Transverse colon (tissue), 4 donors: ENCODE measurements at regions of chr18 and their contacts with region 1.

Region 1: DNA sequence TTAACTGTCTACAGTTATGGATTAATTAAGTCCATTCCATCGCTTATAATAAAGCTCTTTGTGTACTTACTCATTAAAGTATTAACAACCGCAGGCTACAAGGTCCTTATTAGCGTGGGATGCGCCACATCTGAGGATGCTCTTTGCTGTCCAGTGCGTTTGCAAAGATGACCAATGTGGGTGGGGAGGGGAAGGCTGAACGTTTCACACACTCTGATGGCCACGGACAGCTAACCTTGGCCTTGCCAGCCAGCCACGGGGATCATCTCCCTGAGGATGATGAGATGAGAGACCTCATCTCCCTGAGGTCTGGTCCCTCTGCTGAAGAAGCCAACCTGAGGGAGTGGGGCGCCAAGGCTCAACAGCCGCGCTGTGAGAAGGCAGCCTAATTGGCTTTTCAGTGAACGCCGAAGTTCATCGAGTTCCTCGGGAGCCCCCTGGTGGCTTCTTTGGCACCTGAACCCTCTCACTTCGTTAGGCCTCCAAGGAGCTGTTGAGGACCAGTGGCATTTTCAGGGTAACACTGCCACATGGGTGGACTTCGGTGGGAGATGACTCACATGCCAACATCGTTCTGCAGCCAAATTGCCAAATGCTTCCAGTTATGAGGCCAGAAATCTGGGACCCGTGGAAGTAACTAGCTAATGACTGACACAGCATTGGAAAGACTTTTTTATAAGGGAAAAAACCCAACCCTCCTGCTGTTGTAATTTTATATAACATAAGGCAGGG is 69.3 kb upstream of the SEC11C start:
- DNase-seq: peak; percentile 87
- H3K4me3 ChIP-seq: no peak overlapping the region
- H3K27ac ChIP-seq: no peak overlapping the region
- H3K4me1 ChIP-seq: peaks cover 0 to 3% (median 0%) of the 10 kb centered on the region in 4 donors
- H3K27me3 ChIP-seq: no peaks in the 10 kb centered on the region
- CTCF ChIP-seq: peak; percentile 74 to 89 (median 84)
- EP300 ChIP-seq: no peak
- POLR2A ChIP-seq: no peak

Region 2: DNA sequence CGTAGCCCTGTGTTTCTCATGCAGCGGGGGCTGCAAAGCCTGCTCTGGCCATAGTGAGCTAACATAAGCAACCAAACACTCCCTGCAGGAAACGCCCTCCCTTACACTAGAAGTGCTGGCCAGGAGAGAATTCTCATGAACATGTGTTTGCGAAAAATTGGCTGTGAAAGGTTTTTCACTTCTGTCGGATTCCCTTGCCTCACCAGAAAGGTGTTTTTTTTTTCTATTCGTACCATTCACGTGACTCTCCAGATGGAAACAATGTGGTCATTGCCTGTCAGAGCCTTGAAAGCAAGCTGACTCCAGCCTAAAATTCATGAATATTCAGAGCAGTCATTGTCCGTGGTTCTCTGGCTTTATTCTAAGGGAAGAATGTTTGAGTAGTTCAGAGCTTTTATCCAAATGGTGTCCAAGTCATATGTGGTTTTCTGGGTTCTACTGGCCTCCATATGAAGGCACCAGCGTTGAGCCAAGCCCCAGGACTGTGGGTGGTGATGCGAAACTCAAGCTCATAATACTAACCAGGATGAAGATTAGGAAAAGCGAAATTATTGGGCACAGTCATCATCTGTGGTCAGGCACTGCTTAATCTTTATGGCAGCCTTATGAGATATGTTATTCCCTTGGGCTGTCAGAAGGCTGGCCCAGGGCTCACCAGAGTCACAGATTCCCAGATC is 677.9 kb before region 1 on chr18:
- in situ Hi-C with region 1: loop called in 1 of 4 experiments (anchors 25 kb)
- intact Hi-C with region 1: no loop called
- DNase-seq: no peak
- H3K4me3 ChIP-seq: no peak overlapping the region
- H3K27ac ChIP-seq: peak overlapping the region; percentile 57 to 77 (median 66)
- H3K4me1 ChIP-seq: peaks cover 8 to 32% (median 13%) of the 10 kb centered on the region in 4 donors
- H3K27me3 ChIP-seq: no peaks in the 10 kb centered on the region
- CTCF ChIP-seq: no peak
- EP300 ChIP-seq: no peak
- POLR2A ChIP-seq: no peak

Region 3: GRCh38 chr18:58501066-58501896 is 569.1 kb before region 1 on chr18:
- in situ Hi-C with region 1: loop called in 1 of 4 experiments (anchors 25 kb)
- intact Hi-C with region 1: no loop called
- DNase-seq: no peak
- H3K4me3 ChIP-seq: no peak overlapping the region
- H3K27ac ChIP-seq: peak overlapping the region; percentile 48 to 54 (median 53)
- H3K4me1 ChIP-seq: peaks cover 0 to 33% (median 11%) of the 10 kb centered on the region in 4 donors
- H3K27me3 ChIP-seq: no peaks in the 10 kb centered on the region
- CTCF ChIP-seq: no peak
- EP300 ChIP-seq: no peak
- POLR2A ChIP-seq: no peak

Region 4: DNA sequence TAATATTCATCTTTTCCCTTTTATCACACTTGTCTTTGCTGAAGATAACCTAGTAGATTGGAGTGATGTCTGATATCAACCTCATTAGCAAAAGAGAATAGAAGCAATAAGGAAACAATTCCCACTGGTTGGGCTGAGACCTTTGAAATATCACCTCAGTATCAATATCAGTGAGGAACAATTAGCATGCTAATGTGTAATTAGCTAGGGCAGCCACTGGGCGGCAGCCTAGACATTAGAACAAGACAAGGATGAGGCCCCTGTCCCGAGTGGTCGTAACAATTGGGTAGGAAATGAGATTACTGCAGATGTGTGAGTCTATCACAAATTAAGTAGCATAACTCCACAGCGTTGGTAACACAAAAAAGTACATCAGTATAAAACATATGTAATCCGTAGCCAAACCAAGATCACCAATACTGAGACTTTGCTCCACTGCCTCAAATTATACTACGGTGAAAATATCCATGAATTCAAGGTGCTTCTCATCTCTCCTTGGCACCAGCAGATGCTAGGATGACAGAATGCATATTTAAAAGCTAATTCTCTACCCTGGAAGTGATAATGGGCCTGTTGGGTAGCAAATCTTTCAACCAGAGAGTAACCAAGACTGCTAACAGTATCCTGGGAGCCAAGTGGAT is 540.5 kb before region 1 on chr18:
- in situ Hi-C with region 1: loop called in 3 of 4 experiments (anchors 25 kb)
- intact Hi-C with region 1: loop called (anchors 10 kb)
- DNase-seq: peak; percentile 71
- H3K4me3 ChIP-seq: no peak overlapping the region
- H3K27ac ChIP-seq: no peak overlapping the region
- H3K4me1 ChIP-seq: peaks cover 12 to 38% (median 14%) of the 10 kb centered on the region in 4 donors
- H3K27me3 ChIP-seq: no peaks in the 10 kb centered on the region
- CTCF ChIP-seq: peak; percentile 75 to 88 (median 80)
- EP300 ChIP-seq: no peak
- POLR2A ChIP-seq: no peak

Region 5: GRCh38 chr18:58768293-58768974 is 301.9 kb before region 1 on chr18:
- in situ Hi-C with region 1: no loop called
- intact Hi-C with region 1: loop called (anchors 2 kb)
- DNase-seq: peak; percentile 83
- H3K4me3 ChIP-seq: peak overlapping the region in 2 of 4 donors; percentile 16 to 40
- H3K27ac ChIP-seq: no peak overlapping the region
- H3K4me1 ChIP-seq: peaks cover 7 to 19% (median 12%) of the 10 kb centered on the region in 4 donors
- H3K27me3 ChIP-seq: peaks cover 23% of the 10 kb centered on the region
- CTCF ChIP-seq: peak; percentile 65 to 81 (median 77)
- EP300 ChIP-seq: no peak
- POLR2A ChIP-seq: no peak

Region 6: GRCh38 chr18:58781627-58782194 is 288.6 kb before region 1 on chr18:
- in situ Hi-C with region 1: loop called in 1 of 4 experiments (anchors 5 kb)
- intact Hi-C with region 1: loop called (anchors 2 kb)
- DNase-seq: peak; percentile 80
- H3K4me3 ChIP-seq: no peak overlapping the region
- H3K27ac ChIP-seq: no peak overlapping the region
- H3K4me1 ChIP-seq: peaks cover 0 to 17% (median 11%) of the 10 kb centered on the region in 4 donors
- H3K27me3 ChIP-seq: no peaks in the 10 kb centered on the region
- CTCF ChIP-seq: peak; percentile 84 to 95 (median 87)
- EP300 ChIP-seq: no peak
- POLR2A ChIP-seq: no peak

Region 7: DNA sequence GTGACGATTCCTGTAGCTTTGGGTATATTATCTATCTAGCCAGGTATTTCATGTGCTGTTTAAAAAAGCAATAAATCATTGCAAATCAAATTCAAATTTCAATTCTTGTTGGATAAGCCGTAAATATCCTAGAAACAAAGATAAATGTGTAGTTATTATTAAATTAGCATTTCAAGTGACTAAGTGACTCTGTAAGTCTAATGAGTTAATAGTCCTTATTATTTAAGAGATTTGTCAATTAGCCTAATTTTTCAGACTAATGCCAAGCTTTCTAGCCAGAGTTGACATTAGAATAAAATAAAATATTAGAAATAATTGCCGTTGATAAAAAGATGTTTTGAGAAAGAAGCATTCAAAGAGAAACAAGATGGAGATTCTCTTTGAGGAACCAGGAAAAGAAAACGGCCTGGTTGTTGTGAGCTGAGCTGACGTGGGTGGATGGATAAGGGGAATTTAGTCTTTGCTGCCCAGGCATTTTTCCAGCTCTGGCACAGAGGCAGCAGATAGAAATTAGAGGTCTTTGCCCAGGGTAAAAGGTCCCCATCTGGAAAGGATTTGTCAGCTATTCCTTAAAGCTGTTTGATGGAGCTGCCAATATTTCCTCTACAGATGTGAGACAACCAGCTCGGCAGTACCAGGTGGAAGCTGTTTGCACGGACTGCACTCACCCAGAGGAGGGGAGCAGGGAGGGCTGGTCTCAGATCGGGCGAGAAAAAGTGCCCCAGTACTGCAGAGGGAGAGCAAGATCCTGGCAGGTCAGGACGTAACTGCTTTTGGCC is 48.0 kb before region 1 on chr18:
- in situ Hi-C with region 1: no loop called
- intact Hi-C with region 1: no loop called
- DNase-seq: no peak
- H3K4me3 ChIP-seq: no peak overlapping the region
- H3K27ac ChIP-seq: no peak overlapping the region
- H3K4me1 ChIP-seq: no peaks in the 10 kb centered on the region
- H3K27me3 ChIP-seq: no peaks in the 10 kb centered on the region
- CTCF ChIP-seq: no peak
- EP300 ChIP-seq: no peak
- POLR2A ChIP-seq: no peak

Region 8: DNA sequence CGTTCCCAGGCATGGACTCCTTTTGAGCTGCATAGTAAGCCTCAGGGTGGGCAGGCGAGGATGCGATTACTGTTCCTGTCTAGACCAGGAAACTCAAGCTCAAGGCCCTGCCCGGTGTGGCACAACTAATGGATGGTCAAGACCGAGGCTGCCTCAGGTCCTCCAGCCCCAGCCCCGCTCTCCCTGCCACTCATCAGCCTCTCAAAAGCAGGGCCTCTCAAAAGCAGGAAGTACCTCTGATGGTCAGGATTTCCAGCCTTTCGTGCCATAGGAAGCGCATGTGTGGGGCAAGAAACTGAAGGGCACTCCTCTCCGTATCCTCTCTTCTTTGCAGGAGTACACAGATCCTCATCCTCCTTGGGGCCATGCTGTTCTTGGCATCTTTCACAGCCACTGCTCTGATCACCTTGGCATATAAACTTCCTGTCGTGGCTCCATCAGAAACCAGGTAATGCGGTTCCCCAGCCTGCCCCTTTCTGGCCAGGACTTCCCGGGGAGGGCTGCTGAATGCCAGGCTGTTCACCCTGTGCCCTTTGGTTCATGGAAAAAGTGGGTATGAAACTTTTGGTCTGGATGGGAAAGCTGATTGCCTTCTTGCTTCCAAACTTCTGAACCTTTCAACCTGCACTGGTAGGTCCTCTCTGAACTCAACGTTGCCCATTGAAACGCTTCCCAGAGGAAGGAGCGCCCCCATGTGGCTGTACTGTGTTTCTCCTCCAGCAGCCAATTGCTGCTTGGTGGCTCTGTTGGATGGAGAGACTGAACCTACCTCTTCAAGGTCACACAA is 13.4 kb before region 1 on chr18:
- in situ Hi-C with region 1: no loop called
- intact Hi-C with region 1: no loop called
- DNase-seq: peak; percentile 83
- H3K4me3 ChIP-seq: no peak overlapping the region
- H3K27ac ChIP-seq: no peak overlapping the region
- H3K4me1 ChIP-seq: peaks cover 0 to 4% (median 0%) of the 10 kb centered on the region in 4 donors
- H3K27me3 ChIP-seq: no peaks in the 10 kb centered on the region
- CTCF ChIP-seq: peak; percentile 51 to 79 (median 64)
- EP300 ChIP-seq: no peak
- POLR2A ChIP-seq: no peak